CD14-positive monocyte (primary cell): ENCODE measurements at regions of chr17 and their contacts with region 1.

Region 1: GRCh38 chr17:46266656-46267544 is 28.0 kb upstream of the LRRC37A start:
- DNase-seq: peak; percentile 79 to 85 (median 79)
- H3K4me3 ChIP-seq: peak overlapping the region; percentile 83 to 91 (median 85)
- H3K4me3 Mint-ChIP-seq: peak overlapping the region; percentile 96 to 97
- H3K27ac ChIP-seq: peak overlapping the region; percentile 72 to 73
- H3K27ac Mint-ChIP-seq: peak overlapping the region; percentile 73 to 90 (median 84)
- H3K4me1 ChIP-seq: peaks cover 14 to 30% of the 10 kb centered on the region in 2 donors
- H3K4me1 Mint-ChIP-seq: peaks cover 34% of the 10 kb centered on the region
- H3K27me3 ChIP-seq: no peaks in the 10 kb centered on the region
- H3K27me3 Mint-ChIP-seq: peaks cover 21 to 39% (median 35%) of the 10 kb centered on the region in 3 donors
- CTCF ChIP-seq: peak; percentile 10

Region 2: GRCh38 chr17:45573924-45574770 is 692.8 kb before region 1 on chr17:
- intact Hi-C with region 1: loop called in 1 of 2 experiments (anchors 10 kb)
- DNase-seq: no peak
- H3K4me3 ChIP-seq: no peak overlapping the region
- H3K4me3 Mint-ChIP-seq: no peak overlapping the region
- H3K27ac ChIP-seq: peak overlapping the region in 1 of 2 donors; percentile 2
- H3K27ac Mint-ChIP-seq: no peak overlapping the region
- H3K4me1 ChIP-seq: peaks cover 3 to 29% of the 10 kb centered on the region in 2 donors
- H3K4me1 Mint-ChIP-seq: peaks cover 36% of the 10 kb centered on the region
- H3K27me3 ChIP-seq: no peaks in the 10 kb centered on the region
- H3K27me3 Mint-ChIP-seq: no peaks in the 10 kb centered on the region
- CTCF ChIP-seq: no peak

Region 3: DNA sequence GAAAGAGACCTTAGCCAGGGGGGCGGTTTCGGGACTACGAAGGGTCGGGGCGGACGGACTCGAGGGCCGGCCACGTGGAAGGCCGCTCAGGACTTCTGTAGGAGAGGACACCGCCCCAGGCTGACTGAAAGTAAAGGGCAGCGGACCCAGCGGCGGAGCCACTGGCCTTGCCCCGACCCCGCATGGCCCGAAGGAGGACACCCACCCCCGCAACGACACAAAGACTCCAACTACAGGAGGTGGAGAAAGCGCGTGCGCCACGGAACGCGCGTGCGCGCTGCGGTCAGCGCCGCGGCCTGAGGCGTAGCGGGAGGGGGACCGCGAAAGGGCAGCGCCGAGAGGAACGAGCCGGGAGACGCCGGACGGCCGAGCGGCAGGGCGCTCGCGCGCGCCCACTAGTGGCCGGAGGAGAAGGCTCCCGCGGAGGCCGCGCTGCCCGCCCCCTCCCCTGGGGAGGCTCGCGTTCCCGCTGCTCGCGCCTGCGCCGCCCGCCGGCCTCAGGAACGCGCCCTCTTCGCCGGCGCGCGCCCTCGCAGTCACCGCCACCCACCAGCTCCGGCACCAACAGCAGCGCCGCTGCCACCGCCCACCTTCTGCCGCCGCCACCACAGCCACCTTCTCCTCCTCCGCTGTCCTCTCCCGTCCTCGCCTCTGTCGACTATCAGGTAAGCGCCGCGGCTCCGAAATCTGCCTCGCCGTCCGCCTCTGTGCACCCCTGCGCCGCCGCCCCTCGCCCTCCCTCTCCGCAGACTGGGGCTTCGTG is 372.7 kb before region 1 on chr17 and contains the start of gene MAPT:
- intact Hi-C with region 1: loop called in 1 of 2 experiments (anchors 10 kb)
- DNase-seq: peak; percentile 82 to 88 (median 83)
- H3K4me3 ChIP-seq: peak within 1 kb of the TSS; percentile 45 to 83 (median 62)
- H3K4me3 Mint-ChIP-seq: peak within 1 kb of the TSS; percentile 77 to 90
- H3K27ac ChIP-seq: no peak within 1 kb of the TSS
- H3K27ac Mint-ChIP-seq: peak within 1 kb of the TSS in 2 of 7 donors; percentile 58
- H3K4me1 ChIP-seq: peaks cover 19 to 26% of the 10 kb centered on the region in 2 donors
- H3K4me1 Mint-ChIP-seq: peaks cover 16% of the 10 kb centered on the region
- H3K27me3 ChIP-seq: peaks cover 28 to 73% of the 10 kb centered on the region in 2 donors
- H3K27me3 Mint-ChIP-seq: peaks cover 59 to 83% (median 70%) of the 10 kb centered on the region in 3 donors
- CTCF ChIP-seq: peak; percentile 90
- polyA plus RNA-seq, gene MAPT: 0.04 TPM in 1 of 3 donors, not detected in the others

Region 4: GRCh38 chr17:46157443-46158062 is 109.3 kb before region 1 on chr17:
- intact Hi-C with region 1: no loop called
- DNase-seq: no peak
- H3K4me3 ChIP-seq: no peak overlapping the region
- H3K4me3 Mint-ChIP-seq: no peak overlapping the region
- H3K27ac ChIP-seq: peak overlapping the region in 1 of 2 donors; percentile 51
- H3K27ac Mint-ChIP-seq: no peak overlapping the region
- H3K4me1 ChIP-seq: peaks cover 19 to 28% of the 10 kb centered on the region in 2 donors
- H3K4me1 Mint-ChIP-seq: peaks cover 59% of the 10 kb centered on the region
- H3K27me3 ChIP-seq: no peaks in the 10 kb centered on the region
- H3K27me3 Mint-ChIP-seq: no peaks in the 10 kb centered on the region
- CTCF ChIP-seq: no peak